ENCODE measurements at regions of chr6 and their contacts with region 1.

Region 1: DNA sequence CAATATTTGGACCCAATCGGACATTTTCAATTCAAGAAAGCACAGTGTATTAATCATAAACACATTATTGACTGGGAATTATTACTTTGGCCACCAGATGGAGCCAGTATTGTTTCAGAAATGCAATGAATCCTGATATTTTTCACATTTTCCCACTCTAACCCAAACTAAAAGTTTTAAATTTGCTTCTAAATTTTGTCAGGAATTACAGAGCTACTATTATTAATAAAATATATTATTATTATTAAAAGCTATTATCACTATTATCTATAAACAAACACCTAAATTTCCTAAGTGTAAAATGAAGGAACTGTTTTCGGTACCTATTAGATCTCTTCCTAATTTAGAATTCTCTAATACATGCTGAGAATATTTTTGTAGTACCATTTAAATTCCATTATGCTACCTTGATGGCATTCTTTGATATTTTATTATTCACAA is 245.3 kb downstream of the OGFRL1 start:
- DNase-seq: peak in 1 of 2 experiments; percentile 34
- H3K4me3 ChIP-seq: no peak overlapping the region
- H3K4me3 Mint-ChIP-seq: no peak overlapping the region
- H3K27ac Mint-ChIP-seq: no peak overlapping the region
- H3K4me1 ChIP-seq: peaks cover 29% of the 10 kb centered on the region
- H3K4me1 Mint-ChIP-seq: peaks cover 35% of the 10 kb centered on the region
- H3K27me3 ChIP-seq: no peaks in the 10 kb centered on the region
- H3K27me3 Mint-ChIP-seq: no peaks in the 10 kb centered on the region
- CTCF ChIP-seq: peak; percentile 63 to 76

Region 2: DNA sequence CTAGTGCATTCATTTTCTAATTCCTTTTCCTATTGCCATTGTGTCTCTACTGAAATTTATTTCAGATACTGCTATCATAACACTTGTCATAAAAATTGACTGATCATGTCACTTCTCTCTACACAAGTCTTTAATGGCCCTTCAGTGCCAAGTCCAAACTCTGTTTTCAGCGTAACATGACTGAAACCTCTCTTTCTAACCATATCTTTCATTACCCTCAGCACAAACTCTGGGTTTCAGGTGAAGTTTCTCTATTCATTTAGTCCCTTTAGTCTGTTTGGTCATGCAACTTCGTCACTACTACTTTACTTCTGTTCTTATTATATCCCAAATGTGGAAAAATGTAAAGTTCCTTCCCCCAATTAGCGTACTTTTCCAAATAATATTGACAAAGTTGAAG is 10.4 kb before region 1 on chr6:
- CTCF ChIA-PET with region 1: no interaction called
- POLR2A ChIA-PET with region 1: no interaction called
- intact Hi-C with region 1: no loop called
- DNase-seq: no peak
- H3K4me3 ChIP-seq: no peak overlapping the region
- H3K4me3 Mint-ChIP-seq: no peak overlapping the region
- H3K27ac Mint-ChIP-seq: no peak overlapping the region
- H3K4me1 ChIP-seq: peaks cover 20% of the 10 kb centered on the region
- H3K4me1 Mint-ChIP-seq: peaks cover 23% of the 10 kb centered on the region
- H3K27me3 ChIP-seq: no peaks in the 10 kb centered on the region
- H3K27me3 Mint-ChIP-seq: no peaks in the 10 kb centered on the region
- CTCF ChIP-seq: no peak

Region 3: DNA sequence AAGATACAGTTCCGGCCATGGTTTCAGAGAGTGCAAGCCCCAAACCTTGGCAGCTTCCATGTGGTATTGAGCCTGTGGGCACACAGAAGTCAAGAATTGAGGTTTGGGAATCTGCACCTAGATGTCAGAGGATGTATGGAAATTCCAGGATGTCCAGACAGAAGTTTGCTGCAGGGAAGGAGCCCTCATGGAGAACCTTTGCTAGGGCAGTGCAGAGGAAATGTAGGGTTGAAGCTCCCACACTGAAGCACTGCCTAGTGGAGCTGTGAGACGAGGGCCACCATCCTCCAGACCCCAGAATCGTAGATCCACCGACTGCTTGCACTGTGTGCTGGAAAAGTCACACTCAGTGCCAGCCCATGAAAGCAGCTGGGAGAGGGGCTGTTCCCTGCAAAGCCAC is 22.2 kb after region 1 on chr6:
- CTCF ChIA-PET with region 1: no interaction called
- POLR2A ChIA-PET with region 1: no interaction called
- intact Hi-C with region 1: no loop called
- DNase-seq: peak in 1 of 2 experiments; percentile 5
- H3K4me3 ChIP-seq: no peak overlapping the region
- H3K4me3 Mint-ChIP-seq: no peak overlapping the region
- H3K27ac Mint-ChIP-seq: no peak overlapping the region
- H3K4me1 ChIP-seq: no peaks in the 10 kb centered on the region
- H3K4me1 Mint-ChIP-seq: no peaks in the 10 kb centered on the region
- H3K27me3 ChIP-seq: no peaks in the 10 kb centered on the region
- H3K27me3 Mint-ChIP-seq: no peaks in the 10 kb centered on the region
- CTCF ChIP-seq: no peak

Region 4: DNA sequence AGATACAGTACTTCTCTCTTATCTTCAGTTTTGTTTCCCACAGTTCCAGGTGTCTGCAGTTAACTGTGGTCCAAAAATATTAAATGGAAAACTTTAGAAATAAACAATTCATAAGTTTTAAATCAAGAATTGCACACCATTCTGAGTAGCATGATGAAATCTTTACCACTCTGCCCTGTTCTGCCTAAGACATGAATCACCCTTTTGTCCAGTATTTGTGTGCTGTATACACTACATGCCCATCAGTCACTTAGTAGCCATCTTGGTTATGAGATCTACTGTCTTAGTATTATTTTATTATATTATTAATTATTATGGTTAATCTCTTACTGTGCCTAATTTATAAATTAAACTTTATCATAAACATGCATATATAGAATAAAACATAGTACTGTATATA is 33.6 kb after region 1 on chr6:
- CTCF ChIA-PET with region 1: no interaction called
- POLR2A ChIA-PET with region 1: no interaction called
- intact Hi-C with region 1: no loop called
- DNase-seq: no peak
- H3K4me3 ChIP-seq: no peak overlapping the region
- H3K4me3 Mint-ChIP-seq: no peak overlapping the region
- H3K27ac Mint-ChIP-seq: no peak overlapping the region
- H3K4me1 ChIP-seq: no peaks in the 10 kb centered on the region
- H3K4me1 Mint-ChIP-seq: no peaks in the 10 kb centered on the region
- H3K27me3 ChIP-seq: no peaks in the 10 kb centered on the region
- H3K27me3 Mint-ChIP-seq: no peaks in the 10 kb centered on the region
- CTCF ChIP-seq: no peak

Region 5: GRCh38 chr6:71678091-71678490 is 144.1 kb after region 1 on chr6:
- CTCF ChIA-PET with region 1: no interaction called
- POLR2A ChIA-PET with region 1: no interaction called
- intact Hi-C with region 1: loop called (anchors 5 kb)
- DNase-seq: no peak
- H3K4me3 ChIP-seq: no peak overlapping the region
- H3K4me3 Mint-ChIP-seq: no peak overlapping the region
- H3K27ac Mint-ChIP-seq: no peak overlapping the region
- H3K4me1 ChIP-seq: peaks cover 65% of the 10 kb centered on the region
- H3K4me1 Mint-ChIP-seq: peaks cover 30% of the 10 kb centered on the region
- H3K27me3 ChIP-seq: no peaks in the 10 kb centered on the region
- H3K27me3 Mint-ChIP-seq: no peaks in the 10 kb centered on the region
- CTCF ChIP-seq: no peak

Region 6: DNA sequence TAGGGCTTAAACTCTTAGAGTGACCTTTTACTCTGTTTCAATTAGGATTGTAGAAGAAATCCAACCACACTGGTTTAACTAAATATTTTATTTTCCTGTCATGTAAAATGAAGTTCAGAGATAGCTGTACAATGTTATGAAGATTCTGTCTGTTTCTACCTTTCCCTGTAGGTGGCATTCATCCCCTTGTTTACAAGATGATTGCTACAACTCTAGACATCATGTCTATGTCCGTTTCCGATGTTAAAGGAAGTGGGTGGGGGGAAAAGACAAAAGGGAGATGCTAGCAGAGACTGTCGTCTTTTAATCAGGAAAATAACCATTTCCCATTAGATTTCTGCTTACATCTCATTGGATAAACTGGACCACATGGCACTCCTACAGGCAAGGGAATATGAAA is 321.4 kb after region 1 on chr6:
- CTCF ChIA-PET with region 1: no interaction called
- POLR2A ChIA-PET with region 1: no interaction called
- intact Hi-C with region 1: loop called (anchors 10 kb)
- DNase-seq: peak in 1 of 2 experiments; percentile 7
- H3K4me3 ChIP-seq: no peak overlapping the region
- H3K4me3 Mint-ChIP-seq: no peak overlapping the region
- H3K27ac Mint-ChIP-seq: no peak overlapping the region
- H3K4me1 ChIP-seq: 0 out of 2 replicates have a peak, but pooled peaks cover 4% of the 10 kb centered on the region
- H3K4me1 Mint-ChIP-seq: peaks cover 9% of the 10 kb centered on the region
- H3K27me3 ChIP-seq: no peaks in the 10 kb centered on the region
- H3K27me3 Mint-ChIP-seq: no peaks in the 10 kb centered on the region
- CTCF ChIP-seq: peak; percentile 11 to 32

Region 7: GRCh38 chr6:72042088-72042487 is 508.1 kb after region 1 on chr6:
- CTCF ChIA-PET with region 1: no interaction called
- POLR2A ChIA-PET with region 1: no interaction called
- intact Hi-C with region 1: loop called (anchors 1 kb)
- DNase-seq: peak in 1 of 2 experiments; percentile 18
- H3K4me3 ChIP-seq: no peak overlapping the region
- H3K4me3 Mint-ChIP-seq: no peak overlapping the region
- H3K27ac Mint-ChIP-seq: no peak overlapping the region
- H3K4me1 ChIP-seq: no peaks in the 10 kb centered on the region
- H3K4me1 Mint-ChIP-seq: no peaks in the 10 kb centered on the region
- H3K27me3 ChIP-seq: no peaks in the 10 kb centered on the region
- H3K27me3 Mint-ChIP-seq: no peaks in the 10 kb centered on the region
- CTCF ChIP-seq: peak; percentile 19 to 51

Region 8: DNA sequence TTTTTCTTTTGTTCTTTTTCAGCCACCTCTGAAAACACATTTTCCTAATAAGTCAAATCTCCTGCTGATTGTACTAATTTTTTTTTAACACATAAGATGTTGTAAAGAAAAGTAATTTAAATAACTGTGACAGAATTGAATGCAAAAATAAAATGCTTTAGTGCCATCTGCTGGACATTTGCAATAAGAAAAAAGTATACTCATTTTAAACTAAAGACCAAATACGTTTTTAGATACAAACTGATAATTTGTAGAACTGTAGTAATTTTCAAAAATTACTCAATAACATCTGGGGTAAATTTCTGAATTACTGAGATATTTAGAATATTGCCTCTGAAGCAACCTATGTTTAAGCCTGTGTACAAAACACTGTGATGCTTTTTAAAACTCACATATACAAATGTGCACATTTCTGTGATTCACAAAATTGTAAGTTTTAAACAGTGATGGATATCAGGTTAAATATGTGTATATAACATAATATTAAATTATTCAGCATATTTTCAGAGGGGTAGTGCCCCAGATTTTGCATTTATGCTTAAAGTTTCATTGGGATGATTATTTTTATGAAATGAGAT is 551.1 kb after region 1 on chr6:
- CTCF ChIA-PET with region 1: no interaction called
- POLR2A ChIA-PET with region 1: no interaction called
- intact Hi-C with region 1: loop called (anchors 1 kb)
- DNase-seq: peak in 1 of 2 experiments; percentile 6
- H3K4me3 ChIP-seq: no peak overlapping the region
- H3K4me3 Mint-ChIP-seq: no peak overlapping the region
- H3K27ac Mint-ChIP-seq: no peak overlapping the region
- H3K4me1 ChIP-seq: no peaks in the 10 kb centered on the region
- H3K4me1 Mint-ChIP-seq: no peaks in the 10 kb centered on the region
- H3K27me3 ChIP-seq: no peaks in the 10 kb centered on the region
- H3K27me3 Mint-ChIP-seq: no peaks in the 10 kb centered on the region
- CTCF ChIP-seq: peak; percentile 32 to 53

Region 9: GRCh38 chr6:72246926-72247325 is 713.0 kb after region 1 on chr6:
- CTCF ChIA-PET with region 1: no interaction called
- POLR2A ChIA-PET with region 1: no interaction called
- intact Hi-C with region 1: loop called (anchors 10 kb)
- DNase-seq: peak in 1 of 2 experiments; percentile 9
- H3K4me3 ChIP-seq: no peak overlapping the region
- H3K4me3 Mint-ChIP-seq: no peak overlapping the region
- H3K27ac Mint-ChIP-seq: no peak overlapping the region
- H3K4me1 ChIP-seq: no peaks in the 10 kb centered on the region
- H3K4me1 Mint-ChIP-seq: no peaks in the 10 kb centered on the region
- H3K27me3 ChIP-seq: no peaks in the 10 kb centered on the region
- H3K27me3 Mint-ChIP-seq: no peaks in the 10 kb centered on the region
- CTCF ChIP-seq: peak; percentile 12 to 24

Measured in Caco-2 (cell line).